Cardiac septum (tissue), 1 donor: ENCODE measurements at regions of chr5 and their contacts with region 1.

Region 1: GRCh38 chr5:115634343-115635132 is 8.7 kb upstream of the TMED7 start:
- DNase-seq: peak; percentile 92

Region 2: GRCh38 chr5:116068028-116068632 is 433.6 kb after region 1 on chr5:
- intact Hi-C with region 1: loop called (anchors 2 kb)
- DNase-seq: no peak